ENCODE measurements at regions of chr13 and their contacts with region 1.

Region 1: GRCh38 chr13:27293076-27293691 is 22.6 kb downstream of the RASL11A start:
- DNase-seq: no peak
- ATAC-seq: no peak
- H3K4me3 ChIP-seq: no peak overlapping the region
- H3K27ac ChIP-seq: no peak overlapping the region
- H3K4me1 ChIP-seq: no peaks in the 10 kb centered on the region; the same call in 1 of the 2 replicates
- H3K27me3 ChIP-seq: peaks cover 37% of the 10 kb centered on the region
- CTCF ChIP-seq: no peak
- POLR2A ChIP-seq: no peak
- RAD21 ChIP-seq: no peak

Region 2: GRCh38 chr13:27203854-27204253 is 89.3 kb before region 1 on chr13:
- CTCF ChIA-PET with region 1: no interaction called
- POLR2A ChIA-PET with region 1: no interaction called
- dilution Hi-C with region 1: no loop called
- in situ Hi-C with region 1: no loop called
- intact Hi-C with region 1: no loop called
- DNase-seq: peak; percentile 31
- ATAC-seq: peak; percentile 44; the same call in 1 of the 2 replicates
- H3K4me3 ChIP-seq: no peak overlapping the region
- H3K27ac ChIP-seq: no peak overlapping the region
- H3K4me1 ChIP-seq: no peaks in the 10 kb centered on the region
- H3K27me3 ChIP-seq: no peaks in the 10 kb centered on the region
- CTCF ChIP-seq: 0 out of 2 replicates have a peak, but pooled peaks have one; percentile 23
- POLR2A ChIP-seq: no peak
- RAD21 ChIP-seq: peak; percentile 39

Region 3: DNA sequence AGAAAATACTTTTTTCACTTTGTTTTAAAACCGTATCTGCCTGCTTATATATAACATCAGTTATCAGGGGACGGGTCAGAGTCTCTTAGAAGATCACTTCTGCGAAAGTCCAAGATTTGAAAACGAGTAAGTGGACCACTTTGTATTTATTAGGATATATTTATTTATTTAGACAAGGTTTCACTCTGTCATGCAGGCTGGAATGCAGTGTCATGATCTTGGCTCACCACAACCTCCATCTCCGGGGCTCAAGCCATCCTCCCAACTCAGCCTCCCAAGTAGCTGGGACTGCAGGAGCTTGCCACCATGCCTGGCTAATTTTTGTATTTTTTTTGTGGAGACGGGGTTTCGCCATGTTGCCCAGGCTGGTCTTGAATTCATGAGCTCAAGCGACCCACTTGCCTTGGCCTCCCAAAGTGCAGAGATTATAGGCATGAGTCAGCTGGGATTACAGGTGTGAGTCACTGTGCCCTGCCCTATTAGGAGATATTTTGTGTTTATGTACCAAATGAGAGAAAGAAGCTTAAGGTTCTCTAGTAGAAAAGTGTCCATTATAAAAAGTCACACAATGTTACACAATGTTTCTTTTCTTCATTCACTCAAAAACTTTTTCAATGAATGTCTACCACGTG is 16.9 kb after region 1 on chr13:
- CTCF ChIA-PET with region 1: interaction called, 3 read pairs
- POLR2A ChIA-PET with region 1: interaction called, 11 read pairs
- dilution Hi-C with region 1: no loop called
- in situ Hi-C with region 1: no loop called
- intact Hi-C with region 1: no loop called
- DNase-seq: peak; percentile 57
- ATAC-seq: no peak; the same call in 1 of the 2 replicates
- H3K4me3 ChIP-seq: no peak overlapping the region
- H3K27ac ChIP-seq: no peak overlapping the region
- H3K4me1 ChIP-seq: peaks cover 11% of the 10 kb centered on the region
- H3K27me3 ChIP-seq: peaks cover 6% of the 10 kb centered on the region
- CTCF ChIP-seq: no peak
- POLR2A ChIP-seq: no peak
- RAD21 ChIP-seq: no peak

Region 4: GRCh38 chr13:27644302-27644701 is 351.1 kb after region 1 on chr13:
- CTCF ChIA-PET with region 1: no interaction called
- POLR2A ChIA-PET with region 1: no interaction called
- dilution Hi-C with region 1: no loop called
- in situ Hi-C with region 1: no loop called
- intact Hi-C with region 1: no loop called
- DNase-seq: peak; percentile 92
- ATAC-seq: peak; percentile 97
- H3K4me3 ChIP-seq: no peak overlapping the region
- H3K27ac ChIP-seq: no peak overlapping the region
- H3K4me1 ChIP-seq: peaks cover 6% of the 10 kb centered on the region
- H3K27me3 ChIP-seq: no peaks in the 10 kb centered on the region
- CTCF ChIP-seq: no peak
- POLR2A ChIP-seq: no peak
- RAD21 ChIP-seq: no peak

Measured in IMR-90 (cell line).